ENCODE measurements at regions of chr16 and their contacts with region 1.

Region 1: DNA sequence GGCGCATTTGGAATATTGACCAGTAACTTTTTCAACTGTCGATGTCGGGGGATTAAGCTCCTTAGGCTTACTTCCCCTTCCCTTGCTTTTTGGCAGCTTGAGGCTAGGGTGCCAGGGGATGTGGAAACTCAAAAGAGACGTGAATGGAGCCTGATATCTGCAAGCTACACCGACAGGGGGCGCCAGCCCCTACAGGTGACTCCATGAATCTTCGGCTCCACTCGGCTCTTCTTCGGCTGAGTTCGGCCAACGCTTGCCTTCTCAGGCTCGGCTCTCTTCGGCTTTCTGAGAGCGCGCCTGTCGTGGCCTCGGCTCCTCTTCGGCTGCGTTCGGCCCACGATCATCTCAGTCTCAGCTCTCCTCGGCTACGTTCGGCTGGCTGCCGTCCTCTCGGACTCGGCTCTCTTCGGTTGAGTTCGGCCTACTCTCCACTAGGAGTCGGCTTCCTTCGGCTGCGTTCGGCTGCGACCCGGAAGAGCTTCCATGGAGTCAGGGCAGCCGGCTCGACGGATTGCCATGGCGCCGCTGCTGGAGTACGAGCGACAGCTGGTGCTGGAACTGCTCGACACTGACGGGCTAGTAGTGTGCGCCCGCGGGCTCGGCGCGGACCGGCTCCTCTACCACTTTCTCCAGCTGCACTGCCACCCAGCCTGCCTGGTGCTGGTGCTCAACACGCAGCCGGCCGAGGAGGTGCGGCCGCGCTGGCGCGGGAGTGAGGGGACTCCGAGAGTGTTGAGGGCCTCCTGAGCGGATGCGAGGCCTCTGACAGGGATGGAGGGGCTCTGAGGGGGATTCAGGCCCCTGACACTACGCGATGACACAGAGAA is at the start of gene ERCC4:
- DNase-seq: peak; percentile 99 to 100
- H3K4me3 ChIP-seq: peak within 1 kb of the TSS; percentile 92 to 94
- H3K27ac ChIP-seq: peak within 1 kb of the TSS; percentile 68 to 78
- H3K4me1 ChIP-seq: peaks cover 4 to 9% of the 10 kb centered on the region in 2 donors
- H3K27me3 ChIP-seq: no peaks in the 10 kb centered on the region
- CTCF ChIP-seq: peak; percentile 70 to 94 (median 78)
- total RNA-seq, gene ERCC4: 6.2 TPM

Region 2: GRCh38 chr16:13866073-13866472 is 53.8 kb before region 1 on chr16:
- intact Hi-C with region 1: loop called (anchors 1 kb)
- DNase-seq: peak in 1 of 2 donors; percentile 78
- H3K4me3 ChIP-seq: no peak overlapping the region
- H3K27ac ChIP-seq: no peak overlapping the region
- H3K4me1 ChIP-seq: peaks cover 0 to 3% of the 10 kb centered on the region in 2 donors
- H3K27me3 ChIP-seq: no peaks in the 10 kb centered on the region
- CTCF ChIP-seq: peak; percentile 20 to 71 (median 67)

Region 3: DNA sequence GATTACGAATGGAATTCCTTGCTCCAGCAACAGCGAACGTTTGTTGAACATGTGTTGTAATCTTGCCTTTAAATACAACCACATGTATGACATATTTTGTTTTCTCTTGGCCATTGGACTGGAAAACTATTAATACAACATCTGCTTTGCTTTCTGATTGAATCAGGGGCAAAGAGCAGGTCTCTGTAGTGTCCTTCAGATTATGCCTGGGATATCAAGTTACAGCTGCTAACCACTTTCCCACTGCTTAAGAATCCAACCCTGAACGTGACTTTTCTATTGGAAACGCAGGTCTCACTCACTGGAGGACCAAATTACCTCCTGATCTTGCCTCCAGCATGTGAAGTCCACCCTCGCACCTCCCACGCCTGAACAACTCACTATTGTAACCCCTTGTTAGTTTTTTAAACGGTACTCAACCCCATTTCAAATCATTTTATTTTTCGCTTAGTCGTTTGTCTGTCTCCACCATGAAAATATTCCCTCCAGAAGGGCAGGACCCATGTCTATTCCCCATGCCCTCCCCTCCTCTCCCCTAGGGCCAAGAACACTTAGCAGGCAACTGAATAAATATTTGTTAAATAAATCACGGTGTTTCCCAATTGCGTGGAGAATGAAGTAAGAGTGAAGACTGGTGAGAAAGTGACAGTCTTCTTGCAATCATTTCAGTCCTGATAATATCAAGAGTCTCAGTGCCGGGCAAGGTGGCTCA is 93.8 kb after region 1 on chr16:
- intact Hi-C with region 1: loop called (anchors 5 kb)
- DNase-seq: peak in 1 of 2 donors; percentile 74
- H3K4me3 ChIP-seq: peak overlapping the region; percentile 8 to 17
- H3K27ac ChIP-seq: peak overlapping the region; percentile 77 to 90
- H3K4me1 ChIP-seq: peaks cover 9 to 48% of the 10 kb centered on the region in 2 donors
- H3K27me3 ChIP-seq: no peaks in the 10 kb centered on the region
- CTCF ChIP-seq: no peak

Region 4: GRCh38 chr16:14186007-14186794 is 266.3 kb after region 1 on chr16:
- intact Hi-C with region 1: loop called (anchors 5 kb)
- DNase-seq: no peak
- H3K4me3 ChIP-seq: peak overlapping the region; percentile 48 to 55
- H3K27ac ChIP-seq: peak overlapping the region; percentile 66 to 67
- H3K4me1 ChIP-seq: peaks cover 0 to 11% of the 10 kb centered on the region in 2 donors
- H3K27me3 ChIP-seq: no peaks in the 10 kb centered on the region
- CTCF ChIP-seq: peak; percentile 28 to 57 (median 39)

Region 5: GRCh38 chr16:14285513-14286385 is 365.9 kb after region 1 on chr16:
- intact Hi-C with region 1: loop called (anchors 5 kb)
- DNase-seq: peak; percentile 62 to 95
- H3K4me3 ChIP-seq: peak overlapping the region; percentile 80 to 88
- H3K27ac ChIP-seq: peak overlapping the region; percentile 65 to 95
- H3K4me1 ChIP-seq: peaks cover 3 to 6% of the 10 kb centered on the region in 2 donors
- H3K27me3 ChIP-seq: no peaks in the 10 kb centered on the region
- CTCF ChIP-seq: no peak

Region 6: DNA sequence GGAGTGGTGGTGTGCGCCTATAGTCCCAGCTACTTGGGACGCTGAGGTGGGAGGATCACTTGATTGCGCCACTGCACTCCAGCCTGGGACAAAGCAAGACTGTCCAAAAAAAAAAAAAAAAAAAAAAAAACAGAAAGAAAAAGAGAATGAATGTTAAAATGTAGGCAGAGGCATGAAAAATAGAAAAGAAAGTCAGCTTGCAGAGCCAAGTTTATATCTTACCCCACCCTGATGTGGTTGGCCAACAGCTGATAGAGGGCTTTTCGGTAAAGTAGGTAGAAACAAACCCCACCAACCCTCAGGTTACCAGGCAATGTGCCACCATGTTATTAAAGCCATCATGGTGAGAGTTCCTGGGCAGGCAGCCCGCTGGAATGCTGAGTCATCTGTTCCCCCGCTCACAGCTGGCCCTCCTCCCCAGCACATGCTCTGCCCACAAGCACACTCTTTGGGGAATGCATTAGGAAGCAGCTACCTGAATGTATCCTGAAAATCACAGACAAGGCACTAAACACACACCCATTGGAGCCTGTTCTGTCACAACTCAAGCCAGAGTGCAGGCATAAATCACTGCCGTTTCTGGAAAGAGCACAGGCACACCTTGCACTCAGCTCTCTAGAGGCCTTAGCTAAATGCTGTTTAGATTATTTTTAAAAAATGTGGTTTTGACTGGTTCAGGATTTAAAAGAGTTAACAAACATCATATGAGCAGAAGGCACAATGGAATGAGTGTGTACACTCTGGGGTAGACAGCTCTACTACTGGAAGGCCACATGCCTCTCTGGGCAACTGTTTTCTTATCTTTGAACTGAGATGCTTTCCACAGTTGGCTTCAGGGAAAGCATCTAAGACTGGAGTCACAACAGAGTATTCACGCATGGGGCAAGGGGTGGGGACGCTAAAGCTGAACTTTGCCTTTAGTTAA is 581.7 kb after region 1 on chr16:
- intact Hi-C with region 1: loop called (anchors 10 kb)
- DNase-seq: peak; percentile 66 to 93
- H3K4me3 ChIP-seq: peak overlapping the region in 1 of 2 donors; percentile 33
- H3K27ac ChIP-seq: peak overlapping the region; percentile 77 to 84
- H3K4me1 ChIP-seq: peaks cover 10 to 25% of the 10 kb centered on the region in 2 donors
- H3K27me3 ChIP-seq: no peaks in the 10 kb centered on the region
- CTCF ChIP-seq: no peak

Measured in ascending aorta (tissue), 2 donors.